ENCODE measurements at regions of chr9 and their contacts with region 1.

Region 1: GRCh38 chr9:101437806-101438232 is 2.2 kb upstream of the ALDOB start:
- H3K4me3 Mint-ChIP-seq: no peak overlapping the region
- H3K27ac Mint-ChIP-seq: no peak overlapping the region
- H3K4me1 Mint-ChIP-seq: no peaks in the 10 kb centered on the region
- H3K27me3 Mint-ChIP-seq: peaks cover 2% of the 10 kb centered on the region

Region 2: DNA sequence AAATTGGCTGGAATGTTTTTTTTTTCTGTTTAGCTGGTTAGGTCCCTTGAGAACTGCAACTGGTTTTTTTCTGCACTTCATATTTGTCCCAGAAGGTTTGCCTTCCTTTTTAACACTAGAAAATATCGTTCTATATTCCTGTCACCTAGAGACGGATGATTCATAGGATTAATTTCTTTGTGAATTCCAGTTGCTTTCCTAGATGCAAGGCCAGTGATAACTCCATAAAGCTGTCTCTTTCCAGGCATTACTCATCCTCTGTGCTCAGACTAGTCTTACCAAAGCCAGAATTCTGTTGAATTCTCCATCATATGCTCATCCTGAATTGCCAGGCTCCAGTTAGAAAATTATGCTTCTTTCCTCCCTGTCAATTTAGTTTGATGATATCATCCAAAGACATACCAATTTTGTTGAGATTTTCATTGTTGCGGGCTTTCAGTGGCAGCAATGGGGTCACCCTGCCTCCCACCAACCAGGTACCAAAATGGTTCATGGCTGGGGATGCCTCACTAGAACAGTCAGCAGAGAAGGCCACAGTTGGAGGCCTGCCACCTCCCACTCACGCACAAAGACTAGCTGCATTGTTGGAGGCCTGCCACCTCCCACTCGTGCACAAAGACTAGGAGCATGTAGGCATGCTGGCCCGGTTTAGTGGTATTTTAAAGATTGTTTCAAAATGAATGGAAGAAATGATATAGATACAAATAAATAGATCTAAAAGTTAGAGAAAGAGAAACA is 61.5 kb before region 1 on chr9:
- intact Hi-C with region 1: loop called (anchors 10 kb)
- H3K4me3 Mint-ChIP-seq: no peak overlapping the region
- H3K27ac Mint-ChIP-seq: no peak overlapping the region
- H3K4me1 Mint-ChIP-seq: no peaks in the 10 kb centered on the region
- H3K27me3 Mint-ChIP-seq: no peaks in the 10 kb centered on the region

Region 3: GRCh38 chr9:101543098-101543735 is 105.4 kb after region 1 on chr9:
- intact Hi-C with region 1: no loop called
- H3K4me3 Mint-ChIP-seq: no peak overlapping the region
- H3K27ac Mint-ChIP-seq: no peak overlapping the region
- H3K4me1 Mint-ChIP-seq: no peaks in the 10 kb centered on the region
- H3K27me3 Mint-ChIP-seq: no peaks in the 10 kb centered on the region